Activated T-helper 1 cell treated with anti-CD3 and anti-CD28 coated beads, Interleukin-12 subunit alpha, Interleukin-12 subunit beta, Interleukin-2, Interleukin-4 antibody, amounts not matched to agents 30 ng/mL and 10 ng/mL and 1 ng/mL, durations not matched to agents 14 hours and 24 hours and 36 hours (primary cell): ENCODE measurements at regions of chr6 and their contacts with region 1.

Region 1: GRCh38 chr6:72348926-72349325 is 272.9 kb upstream of the KCNQ5 start:
- DNase-seq: no peak
- H3K4me3 Mint-ChIP-seq: no peak overlapping the region
- H3K27ac Mint-ChIP-seq: no peak overlapping the region
- H3K4me1 Mint-ChIP-seq: no peaks in the 10 kb centered on the region
- H3K27me3 Mint-ChIP-seq: no peaks in the 10 kb centered on the region

Region 2: GRCh38 chr6:70753870-70754380 is 1595.0 kb before region 1 on chr6:
- intact Hi-C with region 1: no loop called
- DNase-seq: no peak
- H3K4me3 Mint-ChIP-seq: no peak overlapping the region
- H3K27ac Mint-ChIP-seq: no peak overlapping the region
- H3K4me1 Mint-ChIP-seq: no peaks in the 10 kb centered on the region
- H3K27me3 Mint-ChIP-seq: no peaks in the 10 kb centered on the region

Region 3: DNA sequence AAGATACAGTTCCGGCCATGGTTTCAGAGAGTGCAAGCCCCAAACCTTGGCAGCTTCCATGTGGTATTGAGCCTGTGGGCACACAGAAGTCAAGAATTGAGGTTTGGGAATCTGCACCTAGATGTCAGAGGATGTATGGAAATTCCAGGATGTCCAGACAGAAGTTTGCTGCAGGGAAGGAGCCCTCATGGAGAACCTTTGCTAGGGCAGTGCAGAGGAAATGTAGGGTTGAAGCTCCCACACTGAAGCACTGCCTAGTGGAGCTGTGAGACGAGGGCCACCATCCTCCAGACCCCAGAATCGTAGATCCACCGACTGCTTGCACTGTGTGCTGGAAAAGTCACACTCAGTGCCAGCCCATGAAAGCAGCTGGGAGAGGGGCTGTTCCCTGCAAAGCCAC is 792.8 kb before region 1 on chr6:
- intact Hi-C with region 1: no loop called
- DNase-seq: no peak
- H3K4me3 Mint-ChIP-seq: no peak overlapping the region
- H3K27ac Mint-ChIP-seq: no peak overlapping the region
- H3K4me1 Mint-ChIP-seq: no peaks in the 10 kb centered on the region
- H3K27me3 Mint-ChIP-seq: no peaks in the 10 kb centered on the region

Region 4: GRCh38 chr6:71727632-71728294 is 621.2 kb before region 1 on chr6:
- intact Hi-C with region 1: no loop called
- DNase-seq: no peak
- H3K4me3 Mint-ChIP-seq: no peak overlapping the region
- H3K27ac Mint-ChIP-seq: no peak overlapping the region
- H3K4me1 Mint-ChIP-seq: no peaks in the 10 kb centered on the region
- H3K27me3 Mint-ChIP-seq: no peaks in the 10 kb centered on the region

Region 5: DNA sequence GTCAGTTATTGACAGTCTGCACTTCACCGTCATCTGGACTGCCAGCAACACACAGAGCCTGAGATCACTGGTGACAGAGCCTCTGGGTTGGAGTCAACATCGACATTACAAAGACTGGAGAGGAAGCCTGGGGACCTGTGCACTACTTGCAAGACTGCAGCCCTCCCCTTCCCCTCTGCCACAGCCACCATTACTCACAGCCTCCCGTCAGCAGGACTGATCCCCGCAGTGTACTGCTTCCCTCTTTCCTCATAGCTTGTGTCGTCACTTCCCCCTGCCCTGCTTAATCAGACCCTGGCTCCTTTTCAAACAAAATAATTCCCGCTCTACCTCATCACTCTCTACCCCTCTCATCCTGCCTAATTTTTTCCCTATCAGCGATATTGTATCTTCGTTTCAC is 37.4 kb after region 1 on chr6:
- intact Hi-C with region 1: loop called (anchors 2 kb)
- DNase-seq: no peak
- H3K4me3 Mint-ChIP-seq: no peak overlapping the region
- H3K27ac Mint-ChIP-seq: no peak overlapping the region
- H3K4me1 Mint-ChIP-seq: no peaks in the 10 kb centered on the region
- H3K27me3 Mint-ChIP-seq: no peaks in the 10 kb centered on the region